Activated CD4-positive, alpha-beta T cell treated with anti-CD3 and anti-CD28 coated beads, Interleukin-2, amount 10 ng/mL, durations not matched to agents 24 days and 14 days (primary cell): ENCODE measurements at regions of chr2 and their contacts with region 1.

Region 1: GRCh38 chr2:196205881-196206435 is 34.6 kb upstream of the STK17B start:
- DNase-seq: no peak
- H3K4me3 Mint-ChIP-seq: no peak overlapping the region
- H3K27ac Mint-ChIP-seq: no peak overlapping the region
- H3K4me1 Mint-ChIP-seq: peaks cover 36% of the 10 kb centered on the region
- H3K27me3 Mint-ChIP-seq: no peaks in the 10 kb centered on the region

Region 2: GRCh38 chr2:196149948-196150347 is 56.0 kb before region 1 on chr2:
- intact Hi-C with region 1: no loop called
- DNase-seq: peak; percentile 53
- H3K4me3 Mint-ChIP-seq: peak overlapping the region; percentile 70
- H3K27ac Mint-ChIP-seq: peak overlapping the region; percentile 90
- H3K4me1 Mint-ChIP-seq: peaks cover 75% of the 10 kb centered on the region
- H3K27me3 Mint-ChIP-seq: no peaks in the 10 kb centered on the region

Region 3: GRCh38 chr2:196182439-196183171 is 23.4 kb before region 1 on chr2:
- intact Hi-C with region 1: loop called (anchors 1 kb)
- DNase-seq: no peak
- H3K4me3 Mint-ChIP-seq: peak overlapping the region; percentile 84
- H3K27ac Mint-ChIP-seq: peak overlapping the region; percentile 98
- H3K4me1 Mint-ChIP-seq: peaks cover 57% of the 10 kb centered on the region
- H3K27me3 Mint-ChIP-seq: no peaks in the 10 kb centered on the region

Region 4: DNA sequence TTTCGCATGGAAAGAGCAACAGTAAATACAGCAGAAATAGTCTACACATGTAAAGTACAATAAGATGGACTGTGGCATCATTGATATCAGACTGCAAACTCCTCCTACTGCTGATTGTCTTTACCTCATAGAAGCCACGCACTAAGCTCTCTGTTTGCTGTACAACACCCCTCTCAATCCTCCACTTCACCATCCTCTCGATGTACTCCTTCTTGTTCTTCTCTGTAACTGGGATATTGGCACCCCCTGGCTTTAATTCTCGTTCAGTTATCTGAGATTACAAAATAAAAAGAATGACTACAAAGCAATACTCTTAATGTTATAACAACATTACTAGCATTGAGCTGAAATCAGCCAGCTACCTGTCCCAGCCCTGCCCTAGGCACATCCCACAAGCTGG is 14.7 kb after region 1 on chr2:
- intact Hi-C with region 1: no loop called
- DNase-seq: peak; percentile 58
- H3K4me3 Mint-ChIP-seq: no peak overlapping the region
- H3K27ac Mint-ChIP-seq: no peak overlapping the region
- H3K4me1 Mint-ChIP-seq: peaks cover 28% of the 10 kb centered on the region
- H3K27me3 Mint-ChIP-seq: no peaks in the 10 kb centered on the region

Region 5: GRCh38 chr2:196233021-196233804 is 27.3 kb after region 1 on chr2:
- intact Hi-C with region 1: loop called (anchors 1 kb)
- DNase-seq: no peak
- H3K4me3 Mint-ChIP-seq: no peak overlapping the region
- H3K27ac Mint-ChIP-seq: peak overlapping the region; percentile 72
- H3K4me1 Mint-ChIP-seq: peaks cover 79% of the 10 kb centered on the region
- H3K27me3 Mint-ChIP-seq: no peaks in the 10 kb centered on the region

Region 6: DNA sequence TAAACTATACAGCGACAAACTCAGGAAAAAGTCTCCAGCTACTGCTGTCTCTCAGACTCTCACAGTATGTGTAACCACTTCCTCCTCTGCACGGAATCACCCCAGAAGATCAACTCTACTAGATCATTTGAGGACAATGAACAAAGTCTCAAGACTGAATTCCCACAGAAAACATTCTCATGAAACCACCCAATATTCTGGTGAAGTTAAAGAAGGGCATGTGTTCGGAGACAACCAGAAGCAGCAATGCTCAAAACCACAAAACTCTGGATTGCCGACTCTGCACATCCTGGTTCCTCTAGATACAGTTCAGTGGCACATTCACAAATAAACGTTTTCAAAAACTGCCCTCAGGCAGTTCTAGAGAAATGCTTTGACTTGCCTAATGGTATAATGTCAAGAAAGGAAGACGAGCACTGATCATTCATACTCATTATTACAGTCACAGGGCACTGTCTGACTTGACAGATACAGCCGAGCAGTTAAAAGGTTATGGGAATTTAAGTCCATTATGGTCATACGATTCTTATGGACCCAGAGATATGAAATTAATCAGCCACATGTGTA is 57.3 kb after region 1 on chr2:
- intact Hi-C with region 1: loop called (anchors 1 kb)
- DNase-seq: peak; percentile 89
- H3K4me3 Mint-ChIP-seq: peak overlapping the region; percentile 72
- H3K27ac Mint-ChIP-seq: peak overlapping the region; percentile 93
- H3K4me1 Mint-ChIP-seq: peaks cover 58% of the 10 kb centered on the region
- H3K27me3 Mint-ChIP-seq: no peaks in the 10 kb centered on the region

Region 7: DNA sequence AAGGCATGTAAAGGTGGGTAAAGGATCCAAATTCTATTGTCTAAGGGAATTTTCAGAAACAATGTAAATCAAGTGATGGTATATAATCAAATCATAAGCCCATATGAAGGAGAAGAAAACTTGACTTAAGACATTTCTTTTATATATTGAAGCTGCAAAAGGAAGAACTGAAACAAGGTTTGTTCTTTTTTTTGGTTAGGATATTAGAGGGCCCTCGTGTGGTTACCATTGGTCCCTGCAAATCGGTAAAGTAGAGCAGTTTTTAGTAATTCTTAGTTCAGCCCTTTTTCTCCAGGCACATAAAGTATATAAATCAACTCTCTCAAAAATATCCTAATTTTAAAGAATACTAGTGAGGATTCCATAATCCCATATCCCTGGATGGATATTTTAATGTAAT is 71.0 kb after region 1 on chr2:
- intact Hi-C with region 1: loop called (anchors 1 kb)
- DNase-seq: peak; percentile 80
- H3K4me3 Mint-ChIP-seq: no peak overlapping the region
- H3K27ac Mint-ChIP-seq: no peak overlapping the region
- H3K4me1 Mint-ChIP-seq: peaks cover 48% of the 10 kb centered on the region
- H3K27me3 Mint-ChIP-seq: no peaks in the 10 kb centered on the region